Ascending aorta (tissue), 2 donors: ENCODE measurements at regions of chr1 and their contacts with region 1.

Region 1: DNA sequence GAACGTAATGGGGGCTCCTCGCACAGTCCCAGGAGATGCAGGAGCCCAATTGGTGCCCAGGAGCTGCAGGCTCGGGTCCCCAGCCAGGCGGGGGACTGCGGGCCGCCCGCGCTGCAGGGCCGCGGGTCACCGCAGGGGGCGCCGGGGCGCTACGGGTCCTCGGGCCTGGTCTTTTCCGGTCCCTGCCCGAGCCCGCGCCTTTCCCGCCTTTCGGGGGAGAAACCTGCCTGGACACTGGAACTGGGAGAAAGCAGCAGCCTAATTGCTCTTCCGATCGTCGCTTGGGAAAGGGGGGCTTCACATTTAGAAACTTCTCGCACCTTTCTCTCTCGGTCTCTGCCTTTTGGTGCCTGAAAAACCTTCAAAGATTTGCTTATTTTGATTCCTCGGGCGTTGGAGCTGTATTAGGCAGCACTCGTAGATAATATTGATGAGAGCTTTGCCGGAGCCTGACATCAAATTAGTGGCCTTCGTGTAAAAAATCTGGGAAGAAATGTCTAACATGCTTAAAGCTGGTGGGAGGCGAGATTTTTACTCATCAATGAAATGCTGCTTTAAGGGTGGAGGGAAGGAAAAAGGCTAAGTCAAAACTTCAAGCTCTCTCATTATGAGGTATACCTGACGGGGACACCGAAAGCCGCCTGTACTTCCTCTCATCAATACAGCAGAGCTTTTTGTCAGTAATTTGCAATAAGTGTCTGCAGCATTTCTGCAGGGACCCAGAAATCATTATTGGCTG is 12.6 kb upstream of the BARHL2 start:
- DNase-seq: no peak
- H3K4me3 ChIP-seq: no peak overlapping the region
- H3K27ac ChIP-seq: no peak overlapping the region
- H3K4me1 ChIP-seq: peaks cover 3 to 22% of the 10 kb centered on the region in 2 donors
- H3K27me3 ChIP-seq: peaks cover 36% of the 10 kb centered on the region
- CTCF ChIP-seq: peak in 2 of 3 experiments; percentile 24

Region 2: DNA sequence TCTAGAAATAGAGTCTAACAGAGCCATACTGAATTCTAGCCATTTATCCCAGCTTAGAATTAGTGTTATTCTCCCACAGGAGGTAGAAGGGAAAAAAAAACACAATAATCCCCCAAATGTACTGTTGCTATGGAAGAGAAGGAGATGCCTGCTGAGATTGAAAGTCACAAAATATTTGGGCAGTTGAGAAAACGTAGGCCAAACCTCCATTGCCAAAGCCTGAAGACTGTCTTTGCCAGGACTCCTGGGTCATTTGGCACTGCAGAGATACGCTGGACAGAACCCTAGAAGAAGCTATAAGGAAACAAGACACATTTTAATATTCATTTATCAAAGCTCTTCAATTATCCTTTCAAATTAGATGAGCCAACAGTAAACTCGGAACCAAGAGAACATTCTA is 34.8 kb before region 1 on chr1:
- intact Hi-C with region 1: loop called (anchors 5 kb)
- DNase-seq: no peak
- H3K4me3 ChIP-seq: no peak overlapping the region
- H3K27ac ChIP-seq: no peak overlapping the region
- H3K4me1 ChIP-seq: no peaks in the 10 kb centered on the region
- H3K27me3 ChIP-seq: no peaks in the 10 kb centered on the region
- CTCF ChIP-seq: no peak

Region 3: DNA sequence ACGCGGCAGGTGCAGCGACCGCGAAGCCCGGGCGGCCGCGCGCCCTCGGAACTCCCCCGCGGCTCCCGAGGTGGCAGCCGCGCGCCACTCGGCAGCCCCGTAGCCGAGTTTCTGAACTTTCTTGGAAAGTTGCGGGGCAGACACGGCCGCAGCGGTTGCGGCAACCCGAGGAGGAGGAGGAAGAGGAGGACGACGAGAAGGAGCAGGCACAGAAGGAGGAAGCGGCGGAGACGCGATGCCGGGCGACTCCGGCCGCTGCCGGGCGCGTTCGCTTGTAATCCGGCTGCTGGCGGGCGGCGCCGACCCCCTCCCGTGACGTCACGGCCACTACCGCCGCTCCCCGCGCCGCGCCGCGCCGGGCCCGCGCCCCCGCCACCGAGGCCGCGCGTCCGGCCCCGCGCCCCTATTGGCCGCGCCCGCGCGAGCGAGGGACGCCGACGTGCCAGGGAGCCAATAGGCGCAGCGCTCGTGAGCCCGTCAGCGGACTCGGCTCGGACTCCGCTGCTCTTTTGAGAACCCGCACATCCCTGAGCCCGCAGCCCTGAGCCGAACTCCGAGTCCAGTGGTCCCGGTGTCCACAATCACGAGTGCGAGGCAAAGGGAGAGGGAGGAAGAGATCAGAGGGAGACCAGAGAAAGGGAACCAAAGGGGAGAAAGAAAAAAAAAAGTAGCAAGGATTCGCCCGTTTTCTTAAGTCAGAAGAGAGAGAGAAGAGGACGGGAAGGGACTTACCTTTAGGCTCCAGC is 11.8 kb before region 1 on chr1:
- intact Hi-C with region 1: loop called (anchors 2 kb)
- DNase-seq: no peak
- H3K4me3 ChIP-seq: peak overlapping the region; percentile 49 to 59
- H3K27ac ChIP-seq: no peak overlapping the region
- H3K4me1 ChIP-seq: peaks cover 5 to 18% of the 10 kb centered on the region in 2 donors
- H3K27me3 ChIP-seq: peaks cover 38% of the 10 kb centered on the region
- CTCF ChIP-seq: no peak